ENCODE measurements at regions of chr7 and their contacts with region 1.

Region 1: GRCh38 chr7:155644178-155644970 is at the start of gene RBM33:
- DNase-seq: peak; percentile 62 to 70
- ATAC-seq: peak; percentile 92
- H3K4me3 ChIP-seq: peak within 1 kb of the TSS; percentile 83 to 99 (median 90)
- H3K27ac ChIP-seq: peak within 1 kb of the TSS; percentile 93 to 98 (median 96)
- H3K4me1 ChIP-seq: peaks cover 29% of the 10 kb centered on the region in 2 donors
- H3K27me3 ChIP-seq: no peaks in the 10 kb centered on the region
- CTCF ChIP-seq: no peak
- POLR2A ChIP-seq: peak; percentile 48 to 55
- total RNA-seq, gene RBM33: 16.6 to 30.0 (median 28.1) TPM

Region 2: DNA sequence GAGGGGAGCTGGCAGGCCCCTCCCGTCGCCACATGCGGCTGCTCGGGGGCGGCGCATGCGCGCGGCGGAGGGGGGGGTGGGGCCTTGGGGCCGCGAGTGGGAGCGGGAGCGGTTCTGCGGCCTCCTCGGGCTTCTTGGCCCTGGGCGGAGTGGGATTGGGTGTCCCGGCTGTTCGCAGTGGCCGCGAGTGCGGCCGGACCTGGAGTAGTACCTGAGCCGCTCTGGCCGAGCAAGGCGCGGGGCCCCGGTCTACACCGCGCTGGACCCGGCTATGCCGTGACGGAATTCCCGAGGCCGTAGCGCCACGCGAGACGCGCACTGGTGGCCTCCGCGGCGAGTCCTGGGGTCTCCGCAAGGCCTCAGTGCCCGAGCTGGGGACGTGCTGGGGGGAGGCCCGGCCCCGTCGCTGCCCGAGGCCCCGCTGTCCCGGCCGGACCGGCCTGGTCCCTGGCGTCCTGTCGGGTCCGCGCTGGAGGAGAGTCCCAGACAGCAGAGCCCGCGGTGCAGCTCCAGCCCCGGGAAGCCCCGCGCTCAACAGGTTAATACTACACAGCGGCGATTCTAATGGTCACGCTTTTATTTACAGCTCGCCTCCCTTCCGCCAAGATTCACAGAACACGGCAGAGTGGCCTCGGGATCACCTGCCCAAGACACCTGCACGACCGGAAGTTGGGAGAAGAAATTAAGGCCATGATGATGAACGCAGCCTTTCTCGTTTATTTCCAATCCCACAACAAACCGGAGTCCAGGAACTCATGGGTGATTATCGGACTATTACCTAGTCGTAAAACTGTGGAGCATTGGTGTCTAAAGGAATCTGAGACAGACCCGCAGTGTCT is 640.8 kb before region 1 on chr7:
- in situ Hi-C with region 1: no loop called
- intact Hi-C with region 1: loop called (anchors 2 kb)
- DNase-seq: peak; percentile 63 to 79
- ATAC-seq: peak; percentile 91 to 93
- H3K4me3 ChIP-seq: peak overlapping the region; percentile 74 to 96 (median 86)
- H3K27ac ChIP-seq: peak overlapping the region; percentile 87 to 97 (median 93)
- H3K4me1 ChIP-seq: peaks cover 17 to 18% of the 10 kb centered on the region in 2 donors
- H3K27me3 ChIP-seq: no peaks in the 10 kb centered on the region
- CTCF ChIP-seq: no peak
- POLR2A ChIP-seq: peak; percentile 85 to 86

Region 3: DNA sequence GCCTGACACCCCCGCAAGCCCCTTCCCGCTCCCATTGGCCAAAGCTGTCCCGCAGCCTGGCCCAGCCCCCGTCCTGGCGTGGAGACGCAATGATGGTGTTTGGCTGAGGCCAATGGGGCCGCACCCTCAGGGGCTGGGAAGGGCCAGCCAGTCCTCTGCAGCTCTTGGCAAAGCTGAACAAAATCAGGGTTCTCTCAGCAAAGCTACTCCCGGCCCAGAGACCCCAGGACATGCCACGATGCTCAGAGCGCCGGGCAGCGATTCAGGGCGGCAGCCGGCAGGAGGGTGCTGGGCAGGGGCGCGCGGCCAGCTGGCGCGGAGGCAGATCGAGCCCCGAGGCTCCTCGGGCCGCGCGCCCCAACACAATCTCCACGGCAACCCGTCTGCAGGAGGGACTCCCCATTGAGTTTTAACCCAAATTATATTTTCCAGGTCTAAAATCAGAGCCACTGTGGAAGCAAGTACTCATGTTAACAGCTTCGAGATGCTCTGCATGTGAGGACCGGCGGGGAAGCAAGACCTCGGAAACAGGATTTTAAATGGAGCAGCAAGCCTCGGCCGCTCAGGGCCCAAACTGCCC is 89.2 kb before region 1 on chr7:
- in situ Hi-C with region 1: no loop called
- intact Hi-C with region 1: no loop called
- DNase-seq: no peak
- ATAC-seq: no peak
- H3K4me3 ChIP-seq: no peak overlapping the region
- H3K27ac ChIP-seq: no peak overlapping the region
- H3K4me1 ChIP-seq: no peaks in the 10 kb centered on the region
- H3K27me3 ChIP-seq: no peaks in the 10 kb centered on the region
- CTCF ChIP-seq: no peak
- POLR2A ChIP-seq: no peak

Region 4: GRCh38 chr7:155709453-155709852 is 65.1 kb after region 1 on chr7:
- in situ Hi-C with region 1: no loop called
- intact Hi-C with region 1: loop called (anchors 5 kb)
- DNase-seq: no peak
- ATAC-seq: no peak
- H3K4me3 ChIP-seq: no peak overlapping the region
- H3K27ac ChIP-seq: no peak overlapping the region
- H3K4me1 ChIP-seq: peaks cover 9 to 11% of the 10 kb centered on the region in 2 donors
- H3K27me3 ChIP-seq: no peaks in the 10 kb centered on the region
- CTCF ChIP-seq: no peak
- POLR2A ChIP-seq: no peak

Region 5: DNA sequence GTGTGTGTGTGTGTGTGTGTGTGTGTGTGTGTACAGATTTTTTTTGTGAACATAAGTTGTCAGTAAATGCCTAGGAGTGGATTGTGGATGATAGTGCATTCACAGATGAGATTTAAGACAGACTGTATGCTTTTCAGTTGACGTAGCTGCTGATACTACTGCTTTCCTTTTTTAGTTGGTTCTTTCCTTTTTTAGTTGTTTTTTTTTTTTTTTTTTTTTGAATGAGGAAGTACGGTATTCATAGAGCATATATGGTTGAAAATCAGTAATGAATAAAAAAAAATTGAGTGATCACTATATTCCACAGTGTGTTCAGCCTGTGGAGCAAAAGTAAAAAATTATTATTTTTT is 80.6 kb after region 1 on chr7:
- in situ Hi-C with region 1: no loop called
- intact Hi-C with region 1: no loop called
- DNase-seq: no peak
- ATAC-seq: no peak
- H3K4me3 ChIP-seq: no peak overlapping the region
- H3K27ac ChIP-seq: no peak overlapping the region
- H3K4me1 ChIP-seq: peaks cover 11 to 20% of the 10 kb centered on the region in 2 donors
- H3K27me3 ChIP-seq: no peaks in the 10 kb centered on the region
- CTCF ChIP-seq: no peak
- POLR2A ChIP-seq: no peak

Region 6: GRCh38 chr7:155738652-155739537 is 94.5 kb after region 1 on chr7:
- in situ Hi-C with region 1: no loop called
- intact Hi-C with region 1: loop called (anchors 5 kb)
- DNase-seq: peak; percentile 32 to 67
- ATAC-seq: peak; percentile 67 to 89
- H3K4me3 ChIP-seq: no peak overlapping the region
- H3K27ac ChIP-seq: no peak overlapping the region
- H3K4me1 ChIP-seq: peaks cover 7 to 11% of the 10 kb centered on the region in 2 donors
- H3K27me3 ChIP-seq: no peaks in the 10 kb centered on the region
- CTCF ChIP-seq: peak; percentile 35 to 63 (median 51)
- POLR2A ChIP-seq: no peak